Vagina (tissue), 2 donors: ENCODE measurements at regions of chr15 and their contacts with region 1.

Region 1: GRCh38 chr15:89599021-89599420 is 23.8 kb downstream of the TICRR start:
- DNase-seq: no peak
- H3K4me3 ChIP-seq: no peak overlapping the region
- H3K27ac ChIP-seq: no peak overlapping the region
- H3K4me1 ChIP-seq: no peaks in the 10 kb centered on the region
- H3K27me3 ChIP-seq: no peaks in the 10 kb centered on the region
- CTCF ChIP-seq: no peak
- POLR2A ChIP-seq: no peak

Region 2: GRCh38 chr15:91150502-91151160 is 1551.6 kb after region 1 on chr15:
- intact Hi-C with region 1: loop called (anchors 5 kb)
- DNase-seq: no peak
- H3K4me3 ChIP-seq: no peak overlapping the region
- H3K27ac ChIP-seq: no peak overlapping the region
- H3K4me1 ChIP-seq: no peaks in the 10 kb centered on the region
- H3K27me3 ChIP-seq: no peaks in the 10 kb centered on the region
- CTCF ChIP-seq: no peak
- POLR2A ChIP-seq: no peak